IMR-90 (cell line): ENCODE measurements at regions of chr2 and their contacts with region 1.

Region 1: GRCh38 chr2:158006961-158007719 is 94.5 kb upstream of the UPP2 start:
- DNase-seq: no peak
- ATAC-seq: no peak
- H3K4me3 ChIP-seq: no peak overlapping the region
- H3K27ac ChIP-seq: no peak overlapping the region
- H3K4me1 ChIP-seq: no peaks in the 10 kb centered on the region
- H3K27me3 ChIP-seq: peaks cover 2% of the 10 kb centered on the region
- CTCF ChIP-seq: no peak
- POLR2A ChIP-seq: no peak
- RAD21 ChIP-seq: no peak

Region 2: GRCh38 chr2:157327621-157328500 is 679.3 kb before region 1 on chr2:
- CTCF ChIA-PET with region 1: no interaction called
- POLR2A ChIA-PET with region 1: no interaction called
- dilution Hi-C with region 1: no loop called
- in situ Hi-C with region 1: no loop called
- intact Hi-C with region 1: loop called (anchors 1 kb)
- DNase-seq: peak; percentile 74
- ATAC-seq: peak; percentile 99
- H3K4me3 ChIP-seq: no peak overlapping the region
- H3K27ac ChIP-seq: no peak overlapping the region
- H3K4me1 ChIP-seq: no peaks in the 10 kb centered on the region
- H3K27me3 ChIP-seq: no peaks in the 10 kb centered on the region; the same call in 1 of the 2 replicates
- CTCF ChIP-seq: peak; percentile 78
- POLR2A ChIP-seq: no peak
- RAD21 ChIP-seq: peak; percentile 59

Region 3: DNA sequence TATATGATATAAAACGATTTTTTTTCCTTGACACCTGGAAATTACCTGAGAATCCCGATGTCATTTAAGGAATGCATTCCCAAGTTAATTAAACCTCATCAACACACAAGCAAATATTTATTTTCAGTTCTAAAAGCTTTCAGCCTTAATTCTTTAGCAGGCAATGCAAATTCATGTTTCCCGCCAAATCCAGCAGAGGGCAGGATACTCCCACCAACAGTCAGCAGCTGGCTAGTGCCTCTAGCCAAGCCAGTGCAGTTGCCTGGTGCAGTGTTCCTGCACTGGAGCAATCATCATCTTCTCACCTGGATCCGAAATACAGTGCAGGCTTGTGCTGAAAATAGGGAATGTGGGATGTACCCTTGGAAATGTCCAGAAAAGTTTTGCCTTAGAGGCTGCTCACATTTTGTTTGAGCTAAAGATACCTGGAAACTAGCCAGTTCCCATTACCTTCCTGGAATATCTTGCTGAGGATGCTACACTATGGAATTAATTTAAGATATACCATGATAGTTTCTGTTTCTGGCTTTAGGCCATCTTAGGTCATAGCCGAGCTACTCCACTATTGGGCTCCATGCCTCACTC is 514.9 kb before region 1 on chr2:
- CTCF ChIA-PET with region 1: interaction called, 5 read pairs
- POLR2A ChIA-PET with region 1: no interaction called
- dilution Hi-C with region 1: no loop called
- in situ Hi-C with region 1: loop called (anchors 10 kb)
- intact Hi-C with region 1: loop called (anchors 1 kb)
- DNase-seq: peak; percentile 59
- ATAC-seq: peak; percentile 93
- H3K4me3 ChIP-seq: no peak overlapping the region
- H3K27ac ChIP-seq: no peak overlapping the region
- H3K4me1 ChIP-seq: no peaks in the 10 kb centered on the region
- H3K27me3 ChIP-seq: peaks cover 2% of the 10 kb centered on the region
- CTCF ChIP-seq: peak; percentile 69
- POLR2A ChIP-seq: no peak
- RAD21 ChIP-seq: peak; percentile 69

Region 4: DNA sequence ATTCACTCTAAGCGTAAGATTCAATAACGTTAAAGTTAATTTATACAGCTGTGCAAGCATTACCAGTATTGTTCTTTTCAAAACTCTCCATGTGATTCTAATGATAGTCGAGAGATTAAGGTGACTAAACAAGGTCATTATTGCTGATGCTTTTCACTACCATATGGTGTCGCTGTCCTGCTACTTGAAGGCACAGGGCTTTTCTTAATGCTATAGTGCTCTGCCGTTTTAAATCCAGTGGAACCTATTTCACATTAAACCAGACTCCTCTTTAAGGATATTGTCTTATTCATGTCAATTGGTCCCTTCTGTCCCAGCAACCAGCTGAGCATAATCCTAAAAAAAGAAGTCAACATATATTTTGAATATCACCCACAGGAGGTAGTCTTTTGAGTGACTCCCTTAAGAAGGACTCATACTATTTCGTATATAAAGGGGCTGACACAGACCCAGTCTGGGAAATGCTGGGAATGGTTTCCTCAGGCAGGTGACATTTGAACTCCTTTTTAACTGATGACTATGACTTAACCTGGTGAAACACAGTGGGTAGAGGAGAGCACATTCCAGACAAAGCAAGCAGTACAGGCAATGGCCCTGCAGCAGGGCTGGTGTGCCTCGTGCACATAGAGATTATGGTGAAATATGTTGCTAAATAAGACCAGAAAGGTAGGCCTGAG is 509.4 kb before region 1 on chr2:
- CTCF ChIA-PET with region 1: interaction called, 5 read pairs
- POLR2A ChIA-PET with region 1: no interaction called
- dilution Hi-C with region 1: no loop called
- in situ Hi-C with region 1: loop called (anchors 10 kb)
- intact Hi-C with region 1: loop called (anchors 1 kb)
- DNase-seq: peak; percentile 49
- ATAC-seq: peak; percentile 90
- H3K4me3 ChIP-seq: no peak overlapping the region
- H3K27ac ChIP-seq: no peak overlapping the region
- H3K4me1 ChIP-seq: no peaks in the 10 kb centered on the region
- H3K27me3 ChIP-seq: no peaks in the 10 kb centered on the region; the same call in 1 of the 2 replicates
- CTCF ChIP-seq: peak; percentile 81
- POLR2A ChIP-seq: no peak
- RAD21 ChIP-seq: peak; percentile 75

Region 5: GRCh38 chr2:157628477-157629415 is 378.4 kb before region 1 on chr2 and contains the start of gene ACVR1C:
- CTCF ChIA-PET with region 1: no interaction called
- POLR2A ChIA-PET with region 1: no interaction called
- dilution Hi-C with region 1: no loop called
- in situ Hi-C with region 1: loop called (anchors 25 kb)
- intact Hi-C with region 1: loop called (anchors 1 kb)
- DNase-seq: peak; percentile 37
- ATAC-seq: peak; percentile 95
- H3K4me3 ChIP-seq: peak within 1 kb of the TSS; percentile 56
- H3K27ac ChIP-seq: no peak within 1 kb of the TSS
- H3K4me1 ChIP-seq: peaks cover 4% of the 10 kb centered on the region
- H3K27me3 ChIP-seq: peaks cover 12% of the 10 kb centered on the region
- CTCF ChIP-seq: peak; percentile 44
- POLR2A ChIP-seq: no peak
- RAD21 ChIP-seq: peak; percentile 38; the same call in 1 of the 2 replicates
- total RNA-seq, gene ACVR1C: 0.18 and 0.28 TPM in 2 replicates

Region 6: GRCh38 chr2:157777427-157777826 is 229.7 kb before region 1 on chr2:
- CTCF ChIA-PET with region 1: no interaction called
- POLR2A ChIA-PET with region 1: no interaction called
- dilution Hi-C with region 1: no loop called
- in situ Hi-C with region 1: loop called (anchors 5 kb)
- intact Hi-C with region 1: loop called (anchors 1 kb)
- DNase-seq: peak; percentile 69
- ATAC-seq: peak; percentile 57; the same call in 1 of the 2 replicates
- H3K4me3 ChIP-seq: no peak overlapping the region
- H3K27ac ChIP-seq: no peak overlapping the region
- H3K4me1 ChIP-seq: no peaks in the 10 kb centered on the region
- H3K27me3 ChIP-seq: no peaks in the 10 kb centered on the region
- CTCF ChIP-seq: peak; percentile 79
- POLR2A ChIP-seq: no peak
- RAD21 ChIP-seq: peak; percentile 86